ENCODE measurements at regions of chr11 and their contacts with region 1.

Region 1: GRCh38 chr11:83836883-83837654 is 550.9 kb upstream of the CCDC90B start:
- DNase-seq: no peak
- H3K4me3 ChIP-seq: no peak overlapping the region
- CTCF ChIP-seq: peak; percentile 88

Region 2: GRCh38 chr11:83847467-83848034 is 10.5 kb after region 1 on chr11:
- CTCF ChIA-PET with region 1: interaction called, 12 read pairs
- POLR2A ChIA-PET with region 1: no interaction called
- DNase-seq: no peak
- H3K4me3 ChIP-seq: no peak overlapping the region
- CTCF ChIP-seq: no peak

Region 3: GRCh38 chr11:84518631-84519183 is 681.6 kb after region 1 on chr11:
- CTCF ChIA-PET with region 1: interaction called, 119 read pairs
- POLR2A ChIA-PET with region 1: no interaction called
- DNase-seq: no peak
- H3K4me3 ChIP-seq: no peak overlapping the region
- CTCF ChIP-seq: no peak

Region 4: DNA sequence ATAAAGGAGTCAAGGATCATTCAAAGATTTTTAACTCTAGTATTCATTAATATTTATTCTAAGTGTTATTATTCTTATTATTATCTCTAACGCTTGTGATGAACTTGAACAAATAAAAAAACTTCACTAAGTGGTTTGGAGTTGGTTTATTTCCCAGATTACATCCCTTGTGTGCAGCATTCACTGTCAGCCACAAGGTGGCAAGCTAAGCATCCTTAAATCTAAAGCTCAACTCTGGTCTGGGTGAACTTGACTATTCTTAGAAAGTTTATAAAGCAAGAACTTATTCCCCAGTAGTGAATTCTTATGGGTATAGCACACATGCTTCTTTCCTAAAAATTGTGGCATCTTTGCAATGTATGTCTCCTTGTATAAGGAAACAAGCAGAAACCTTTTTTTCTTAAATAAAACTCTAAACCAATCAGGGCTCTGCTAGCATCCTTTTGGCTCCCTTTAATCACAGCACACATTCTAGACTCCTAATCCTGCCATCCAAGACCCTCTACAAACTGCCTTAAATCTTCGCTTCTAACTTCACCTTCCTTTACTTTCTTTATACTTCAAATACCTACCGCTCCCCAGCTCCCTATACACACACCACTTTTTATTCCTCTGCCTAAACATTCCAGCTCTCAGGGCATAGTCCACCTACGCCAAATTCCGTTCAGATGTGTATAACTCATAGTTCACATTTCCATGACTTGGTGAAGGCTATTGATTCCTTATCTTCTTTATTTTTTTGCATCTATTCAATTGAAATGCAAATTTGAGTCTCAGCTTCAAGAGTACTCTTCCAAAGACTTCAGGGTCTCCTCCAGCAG is 721.2 kb after region 1 on chr11:
- CTCF ChIA-PET with region 1: interaction called, 75 read pairs
- POLR2A ChIA-PET with region 1: no interaction called
- DNase-seq: peak; percentile 28
- H3K4me3 ChIP-seq: no peak overlapping the region
- CTCF ChIP-seq: peak; percentile 71